Left colon (tissue), 2 donors: ENCODE measurements at regions of chr10 and their contacts with region 1.

Region 1: GRCh38 chr10:12264204-12264940 is 68.4 kb downstream of the CDC123 start:
- DNase-seq: peak; percentile 63 to 90
- ATAC-seq: peak; percentile 84

Region 2: GRCh38 chr10:12656518-12657142 is 392.3 kb after region 1 on chr10:
- intact Hi-C with region 1: loop called in 1 of 2 experiments (anchors 5 kb)
- DNase-seq: no peak
- ATAC-seq: peak; percentile 86

Region 3: DNA sequence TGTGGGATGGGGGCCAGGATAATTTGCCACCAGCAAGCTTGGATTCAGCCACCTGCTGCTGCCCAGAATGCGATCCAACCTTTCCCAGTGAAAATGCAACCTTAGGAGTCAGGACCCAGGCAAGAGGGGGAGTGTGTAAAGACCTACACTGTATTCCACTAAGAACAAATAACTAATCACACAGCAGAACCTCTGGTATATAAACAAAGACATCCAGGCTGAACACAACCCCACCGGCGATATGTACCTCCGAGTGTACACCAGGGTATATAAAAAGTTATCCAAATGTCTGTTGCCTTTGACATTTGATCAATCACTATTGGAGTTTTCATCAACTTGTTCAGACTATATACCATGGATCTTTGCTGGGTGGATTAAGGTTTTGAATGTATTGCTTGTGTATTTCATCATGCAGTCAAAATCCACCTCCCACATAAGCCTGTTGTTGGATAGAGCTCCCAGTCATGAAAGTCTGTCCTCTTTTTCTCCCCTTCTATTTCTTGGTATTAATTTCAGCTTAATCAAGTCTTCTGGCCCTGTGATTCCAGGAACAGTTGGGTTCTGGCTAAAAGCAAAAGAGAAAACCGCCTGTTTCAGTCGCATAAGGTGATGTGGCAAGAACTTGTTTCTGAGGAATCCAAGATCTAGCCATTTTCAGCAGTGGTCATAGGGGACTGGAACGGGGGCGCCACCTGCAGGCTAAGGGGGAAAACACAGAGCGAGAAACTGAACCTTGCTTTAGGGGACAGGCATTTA is 446.4 kb after region 1 on chr10:
- intact Hi-C with region 1: loop called in 1 of 2 experiments (anchors 5 kb)
- DNase-seq: peak; percentile 57 to 78
- ATAC-seq: peak; percentile 72